AG04450 (cell line): ENCODE measurements at regions of chr19 and their contacts with region 1.

Region 1: GRCh38 chr19:1672038-1672768 is 19.8 kb upstream of the TCF3 start:
- DNase-seq: no peak
- H3K4me3 ChIP-seq: peak overlapping the region; percentile 32
- H3K27ac ChIP-seq: no peak overlapping the region
- H3K27me3 ChIP-seq: peaks cover 67% of the 10 kb centered on the region
- CTCF ChIP-seq: peak; percentile 72

Region 2: DNA sequence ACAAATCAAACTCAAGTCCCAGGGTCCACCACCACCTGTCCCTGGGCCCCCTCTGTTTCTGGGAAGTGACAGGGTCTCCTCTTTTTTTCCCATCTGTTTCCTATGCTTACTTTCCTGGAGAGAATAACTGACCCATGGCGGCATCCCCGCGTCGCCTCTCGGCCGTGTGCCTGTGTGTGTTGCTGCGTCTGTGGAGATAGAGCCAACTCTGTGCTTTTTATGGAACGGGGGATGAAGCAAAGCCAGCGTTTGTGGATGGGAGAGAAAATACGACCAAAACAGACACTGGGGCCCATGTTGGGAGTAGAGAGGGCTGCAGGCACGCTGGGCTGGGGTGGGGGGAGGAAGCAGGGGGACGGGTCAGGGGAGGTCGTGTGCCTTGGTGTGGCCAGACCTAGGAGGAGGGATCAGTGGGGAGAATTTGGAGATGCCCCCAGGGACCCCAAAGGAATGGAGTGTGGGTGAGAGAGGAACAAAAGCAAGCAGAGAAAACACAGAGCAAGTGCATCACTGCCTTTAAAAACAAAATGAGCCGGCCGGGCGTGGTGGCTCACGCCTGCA is 131.8 kb before region 1 on chr19:
- CTCF ChIA-PET with region 1: interaction called, 17 read pairs
- POLR2A ChIA-PET with region 1: no interaction called
- DNase-seq: no peak
- H3K4me3 ChIP-seq: no peak overlapping the region
- H3K27ac ChIP-seq: no peak overlapping the region
- H3K27me3 ChIP-seq: peaks cover 11% of the 10 kb centered on the region
- CTCF ChIP-seq: no peak

Region 3: GRCh38 chr19:1613146-1613545 is 59.1 kb before region 1 on chr19:
- CTCF ChIA-PET with region 1: no interaction called
- POLR2A ChIA-PET with region 1: no interaction called
- DNase-seq: no peak
- H3K4me3 ChIP-seq: no peak overlapping the region
- H3K27ac ChIP-seq: no peak overlapping the region
- H3K27me3 ChIP-seq: no peaks in the 10 kb centered on the region
- CTCF ChIP-seq: no peak

Region 4: DNA sequence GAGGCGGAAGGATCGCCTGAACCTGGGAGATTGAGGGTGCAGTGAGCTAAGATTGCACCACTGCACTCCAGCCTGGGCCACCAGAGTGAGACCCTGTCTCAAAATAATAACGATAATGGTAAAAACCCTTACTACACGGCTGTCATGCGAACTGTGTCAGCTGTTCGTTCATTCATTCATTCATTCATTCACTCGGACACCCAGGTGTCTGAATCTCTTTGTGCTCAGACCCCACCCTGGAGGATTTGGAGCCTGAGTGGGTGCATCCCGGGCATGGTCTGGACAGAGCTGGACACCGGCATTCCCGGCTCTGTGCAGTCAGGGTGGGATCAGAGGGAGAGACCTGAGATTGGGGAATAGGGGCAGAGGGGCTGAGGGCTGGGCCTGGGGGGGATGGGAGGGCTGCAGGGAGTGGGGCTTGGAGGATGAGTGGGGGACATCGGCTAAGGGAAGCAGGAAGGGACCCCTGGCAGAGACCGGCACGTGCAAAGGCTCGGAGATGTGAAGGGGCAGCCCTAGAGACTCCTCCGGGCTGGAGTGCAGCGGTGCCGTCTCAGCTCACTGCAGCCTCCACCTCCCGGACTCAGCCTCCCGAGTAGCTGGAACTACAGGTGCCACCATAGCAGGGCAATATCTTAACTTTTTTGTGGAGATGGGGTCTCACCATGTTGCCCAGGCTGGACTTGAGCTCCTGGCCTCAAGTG is 11.8 kb after region 1 on chr19:
- CTCF ChIA-PET with region 1: interaction called, 16 read pairs
- POLR2A ChIA-PET with region 1: interaction called, 3 read pairs
- DNase-seq: no peak
- H3K4me3 ChIP-seq: no peak overlapping the region
- H3K27ac ChIP-seq: no peak overlapping the region
- H3K27me3 ChIP-seq: peaks cover 35% of the 10 kb centered on the region
- CTCF ChIP-seq: no peak

Region 5: DNA sequence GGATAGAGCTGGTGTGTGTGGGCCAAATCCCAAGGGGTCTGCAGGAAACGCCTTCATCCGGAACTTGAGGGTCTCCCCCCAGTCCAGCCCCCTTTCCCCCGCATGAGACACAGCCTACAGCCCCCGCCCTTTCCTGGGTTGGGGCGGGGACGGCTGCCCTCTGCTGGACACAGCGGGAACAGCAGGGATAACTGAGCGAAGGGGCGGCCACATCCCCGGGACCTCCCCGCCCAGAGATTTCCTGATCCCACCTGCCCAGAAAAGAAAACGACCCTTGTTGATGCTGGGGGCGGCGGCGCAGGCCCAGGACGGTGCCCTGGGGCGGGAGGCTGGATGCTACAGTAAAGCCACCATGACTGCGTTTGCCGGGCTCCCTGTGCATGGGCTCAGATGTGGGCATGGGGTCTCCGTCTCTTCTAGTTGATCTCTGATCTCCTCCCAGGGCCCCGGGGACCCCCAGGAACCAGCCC is 95.3 kb after region 1 on chr19:
- CTCF ChIA-PET with region 1: interaction called, 19 read pairs
- POLR2A ChIA-PET with region 1: no interaction called
- DNase-seq: no peak
- H3K4me3 ChIP-seq: no peak overlapping the region
- H3K27ac ChIP-seq: no peak overlapping the region
- H3K27me3 ChIP-seq: peaks cover 65% of the 10 kb centered on the region
- CTCF ChIP-seq: peak; percentile 93

Region 6: DNA sequence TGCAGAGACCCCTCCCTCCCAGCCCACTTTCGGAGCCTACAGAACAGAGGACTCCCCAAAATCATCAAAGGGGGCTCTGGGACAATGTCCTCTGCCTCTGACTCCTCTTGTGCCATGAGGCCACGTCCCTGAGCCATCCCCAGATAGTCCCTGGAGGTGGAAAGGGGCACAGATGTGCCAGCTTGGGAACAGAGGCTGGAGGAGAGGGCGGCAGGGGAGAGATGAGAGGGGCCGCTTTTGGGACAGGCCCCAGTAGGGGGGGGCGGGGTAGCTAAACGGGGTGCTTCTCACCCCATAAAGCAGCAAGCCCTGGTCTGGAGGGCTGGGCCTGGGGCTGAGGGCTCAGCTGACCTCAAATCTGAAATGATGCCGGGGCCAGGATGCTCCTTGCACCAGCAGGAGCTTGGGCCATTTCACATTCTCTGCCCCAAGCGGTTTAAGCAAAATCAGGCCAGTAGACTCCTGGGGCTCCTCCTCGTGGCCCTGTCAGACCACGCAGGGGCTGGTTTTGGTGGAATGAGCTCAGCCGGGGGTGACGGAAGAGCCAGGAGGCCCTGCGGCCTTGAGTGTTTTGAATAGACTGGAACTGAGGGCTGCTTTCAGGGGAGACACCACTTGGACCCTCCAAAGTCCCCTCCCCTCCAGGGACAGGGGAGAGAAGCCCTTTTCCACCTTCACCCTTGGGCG is 108.2 kb after region 1 on chr19:
- CTCF ChIA-PET with region 1: interaction called, 12 read pairs
- POLR2A ChIA-PET with region 1: no interaction called
- DNase-seq: no peak
- H3K4me3 ChIP-seq: no peak overlapping the region
- H3K27ac ChIP-seq: no peak overlapping the region
- H3K27me3 ChIP-seq: peaks cover 56% of the 10 kb centered on the region
- CTCF ChIP-seq: peak; percentile 45

Region 7: GRCh38 chr19:1794424-1795172 is 122.4 kb after region 1 on chr19:
- CTCF ChIA-PET with region 1: interaction called, 14 read pairs
- POLR2A ChIA-PET with region 1: no interaction called
- DNase-seq: no peak
- H3K4me3 ChIP-seq: no peak overlapping the region
- H3K27ac ChIP-seq: no peak overlapping the region
- H3K27me3 ChIP-seq: peaks cover 2% of the 10 kb centered on the region
- CTCF ChIP-seq: no peak